Activated CD4-positive, alpha-beta memory T cell treated with anti-CD3 and anti-CD28 coated beads for 36 hours (primary cell): ENCODE measurements at regions of chr11 and their contacts with region 1.

Region 1: GRCh38 chr11:62645956-62646824 is at the start of gene GANAB:
- DNase-seq: peak; percentile 100
- H3K4me3 Mint-ChIP-seq: peak within 1 kb of the TSS; percentile 94
- H3K27ac Mint-ChIP-seq: peak within 1 kb of the TSS; percentile 94
- H3K4me1 Mint-ChIP-seq: peaks cover 30% of the 10 kb centered on the region
- H3K27me3 Mint-ChIP-seq: no peaks in the 10 kb centered on the region
- total RNA-seq, gene GANAB: 247 to 249 TPM

Region 2: GRCh38 chr11:62567018-62567633 is 79.1 kb before region 1 on chr11:
- CTCF ChIA-PET with region 1: no interaction called
- POLR2A ChIA-PET with region 1: no interaction called
- intact Hi-C with region 1: no loop called
- DNase-seq: no peak
- H3K4me3 Mint-ChIP-seq: no peak overlapping the region
- H3K27ac Mint-ChIP-seq: peak overlapping the region; percentile 85
- H3K4me1 Mint-ChIP-seq: peaks cover 62% of the 10 kb centered on the region
- H3K27me3 Mint-ChIP-seq: no peaks in the 10 kb centered on the region

Region 3: GRCh38 chr11:62580959-62581715 is 65.1 kb before region 1 on chr11:
- CTCF ChIA-PET with region 1: no interaction called
- POLR2A ChIA-PET with region 1: no interaction called
- intact Hi-C with region 1: no loop called
- DNase-seq: no peak
- H3K4me3 Mint-ChIP-seq: no peak overlapping the region
- H3K27ac Mint-ChIP-seq: no peak overlapping the region
- H3K4me1 Mint-ChIP-seq: peaks cover 2% of the 10 kb centered on the region
- H3K27me3 Mint-ChIP-seq: no peaks in the 10 kb centered on the region

Region 4: DNA sequence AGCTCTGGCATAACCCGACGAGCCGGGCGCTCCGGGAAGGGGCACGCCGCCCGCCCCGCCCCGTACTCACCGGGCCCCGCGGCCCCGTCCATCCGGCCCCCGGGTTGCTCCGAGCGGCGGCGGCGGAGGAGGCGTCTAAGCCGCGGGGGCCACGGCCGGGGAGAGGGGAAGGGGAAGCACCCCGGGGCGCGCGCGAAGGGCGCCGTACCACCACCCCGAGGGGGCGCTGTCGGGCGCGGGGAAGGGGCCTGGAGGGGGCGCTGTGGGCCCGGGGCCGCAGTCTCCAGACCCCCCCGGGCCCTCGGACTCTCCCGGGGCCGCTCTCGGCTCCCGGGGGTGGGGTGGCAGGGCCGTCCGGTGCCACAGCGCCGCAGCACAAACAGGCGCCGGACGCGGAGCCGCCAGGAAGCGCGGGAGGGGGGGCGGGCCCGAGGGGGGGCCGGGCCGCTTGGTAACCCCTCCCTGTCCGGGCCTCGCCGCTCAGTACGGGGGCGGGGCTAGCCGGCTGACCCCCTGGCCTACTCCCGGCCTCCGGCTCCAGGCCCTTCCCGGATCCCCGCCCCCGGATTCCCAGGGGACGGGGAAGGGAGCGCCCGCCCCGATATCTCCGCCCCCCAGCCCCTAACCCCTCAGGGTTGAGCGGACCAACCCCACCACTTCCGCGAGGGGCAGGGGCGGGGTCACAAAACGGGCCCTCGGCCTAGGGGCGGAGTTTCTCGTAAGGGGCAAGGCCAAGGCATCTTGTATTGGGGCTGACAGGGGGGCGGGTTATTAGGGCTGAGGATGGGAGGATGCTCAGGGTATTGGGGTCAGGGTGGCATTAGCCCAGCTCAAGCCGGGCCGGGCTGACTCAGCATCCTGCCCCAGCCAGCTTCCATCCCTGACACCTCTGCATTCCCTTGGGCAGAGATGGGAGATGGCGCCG is 33.6 kb before region 1 on chr11 and contains the starts of genes EML3 and ROM1:
- CTCF ChIA-PET with region 1: interaction called, 3 read pairs
- POLR2A ChIA-PET with region 1: interaction called, 5 read pairs
- intact Hi-C with region 1: loop called (anchors 2 kb)
- DNase-seq: peak; percentile 90
- H3K4me3 Mint-ChIP-seq: peak within 1 kb of the TSS; percentile 90
- H3K27ac Mint-ChIP-seq: peak within 1 kb of the TSS; percentile 95
- H3K4me1 Mint-ChIP-seq: peaks cover 45% of the 10 kb centered on the region
- H3K27me3 Mint-ChIP-seq: no peaks in the 10 kb centered on the region
- total RNA-seq, gene EML3: 113 to 116 TPM
- total RNA-seq, gene ROM1: 1.1 to 1.5 TPM

Region 5: DNA sequence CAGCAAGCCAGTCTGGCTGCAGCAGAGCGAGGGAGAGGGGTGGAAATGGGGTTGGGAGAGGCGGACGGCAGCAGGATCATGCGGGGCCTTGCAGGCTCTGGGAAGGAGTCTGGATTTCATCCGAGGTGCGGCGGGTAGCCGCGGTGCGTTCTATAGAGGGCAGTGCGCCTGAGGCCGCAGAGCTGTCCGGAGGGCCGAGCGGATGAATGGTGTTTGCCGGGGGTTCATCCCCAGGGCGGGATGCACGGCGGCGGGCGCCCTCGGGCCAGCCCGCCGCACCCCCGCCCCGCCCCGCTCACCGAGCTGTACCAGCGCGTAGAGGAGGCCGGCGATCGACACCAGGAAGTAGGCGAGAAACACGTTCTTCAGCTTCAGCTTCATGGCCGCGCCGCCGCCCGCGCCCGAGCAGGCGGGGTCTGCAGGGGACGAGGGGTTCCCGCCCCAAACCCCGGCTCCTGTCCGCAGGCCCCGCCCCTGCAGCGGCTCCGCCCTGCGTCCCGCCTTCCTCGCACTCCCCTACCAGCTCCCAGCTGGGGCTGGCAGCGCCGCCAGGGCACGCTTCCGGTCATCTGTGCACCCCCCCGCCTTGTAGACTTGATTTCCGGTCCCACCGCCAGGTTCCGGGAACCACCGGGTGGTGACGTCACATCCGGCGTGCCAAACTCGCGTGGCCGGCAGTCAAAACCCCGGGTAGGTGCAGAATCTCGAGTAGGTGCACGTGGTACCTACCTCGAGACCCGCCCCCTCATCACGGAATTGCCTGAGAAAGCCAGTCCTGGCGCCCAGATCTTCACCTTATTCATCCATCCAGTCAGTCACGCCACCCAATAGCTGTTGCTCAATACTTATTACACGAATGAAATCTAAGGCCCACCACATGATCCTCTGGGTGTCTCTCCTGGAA is 24.4 kb before region 1 on chr11 and contains the start of gene B3GAT3:
- CTCF ChIA-PET with region 1: interaction called, 3 read pairs
- POLR2A ChIA-PET with region 1: interaction called, 15 read pairs
- intact Hi-C with region 1: loop called (anchors 1 kb)
- DNase-seq: peak; percentile 98
- H3K4me3 Mint-ChIP-seq: peak within 1 kb of the TSS; percentile 97
- H3K27ac Mint-ChIP-seq: peak within 1 kb of the TSS; percentile 96
- H3K4me1 Mint-ChIP-seq: peaks cover 22% of the 10 kb centered on the region
- H3K27me3 Mint-ChIP-seq: no peaks in the 10 kb centered on the region
- total RNA-seq, gene B3GAT3: 67.0 to 70.4 TPM